ENCODE measurements at regions of chr4 and their contacts with region 1.

Region 1: DNA sequence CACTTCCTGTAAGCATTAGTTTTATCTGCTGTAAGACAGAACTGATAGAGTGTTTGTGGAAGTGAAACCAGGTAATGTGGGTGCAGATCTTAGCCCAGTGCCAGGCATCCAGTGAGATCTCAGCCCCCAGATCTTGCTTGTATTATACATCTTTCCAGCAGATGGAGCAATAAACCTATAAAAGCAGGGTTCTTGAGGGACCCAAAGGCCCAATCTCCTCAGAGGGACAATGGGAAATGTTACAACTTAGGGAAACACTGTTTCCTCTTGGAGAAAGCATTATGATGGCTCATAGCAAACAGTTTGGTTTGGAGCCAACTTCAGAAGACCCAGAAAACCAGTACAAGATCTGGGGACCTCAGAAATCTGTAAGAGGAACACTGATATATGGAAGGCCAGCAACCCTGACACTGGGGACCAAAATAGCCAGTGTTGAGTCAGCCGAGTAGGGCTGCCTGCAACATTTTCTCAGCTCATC is 206.3 kb downstream of the SLC7A11 start:
- DNase-seq: peak in 1 of 10 donors; percentile 25
- H3K4me3 ChIP-seq: no peak overlapping the region
- H3K27ac ChIP-seq: no peak overlapping the region
- H3K27me3 ChIP-seq: no peaks in the 10 kb centered on the region
- CTCF ChIP-seq: peak; percentile 28 to 89 (median 73)

Region 2: GRCh38 chr4:137968956-137969678 is 66.7 kb before region 1 on chr4:
- intact Hi-C with region 1: no loop called
- DNase-seq: no peak
- H3K4me3 ChIP-seq: no peak overlapping the region
- H3K27ac ChIP-seq: no peak overlapping the region
- H3K27me3 ChIP-seq: peaks cover 0 to 4% (median 0%) of the 10 kb centered on the region in 45 donors
- CTCF ChIP-seq: no peak

Region 3: DNA sequence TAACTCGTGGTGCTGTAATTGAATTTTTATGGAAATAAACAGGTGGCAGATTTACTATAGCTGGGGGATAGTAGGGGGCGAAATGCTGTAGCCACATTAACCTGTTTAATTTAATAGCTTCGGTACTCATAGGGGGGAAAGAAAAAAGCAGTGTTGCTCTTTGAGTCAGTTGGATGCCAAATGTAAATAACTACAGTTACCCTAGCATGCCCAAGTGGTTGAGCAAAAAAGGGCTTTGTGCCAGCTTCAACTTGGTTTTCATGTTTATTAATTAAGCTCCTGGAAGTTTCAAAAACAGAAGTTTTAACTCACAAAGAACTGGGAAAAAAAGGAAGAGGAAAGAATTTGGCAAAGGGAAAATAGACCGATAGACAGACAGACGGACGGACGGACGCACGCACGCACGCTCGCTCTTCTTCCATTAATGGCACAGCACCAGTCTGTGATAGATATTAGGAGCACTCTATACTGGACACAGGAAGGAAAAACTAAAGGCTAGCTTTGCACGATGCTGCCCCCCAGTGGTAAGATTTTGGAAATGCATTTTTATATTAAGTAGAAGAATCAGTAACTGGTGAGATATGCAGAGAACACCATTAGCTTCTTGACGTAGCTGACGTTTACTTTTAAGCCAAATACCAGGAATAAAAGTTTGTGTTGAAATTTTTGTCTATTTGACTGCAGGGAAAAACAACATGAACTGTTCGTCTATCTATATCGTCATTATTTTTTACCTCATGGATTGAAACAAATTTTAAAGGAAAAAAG is 54.5 kb after region 1 on chr4:
- intact Hi-C with region 1: loop called (anchors 2 to 10 kb)
- DNase-seq: peak in 5 of 10 donors; percentile 16 to 42 (median 38)
- H3K4me3 ChIP-seq: peak overlapping the region in 42 of 59 donors; percentile 4 to 55 (median 36)
- H3K27ac ChIP-seq: no peak overlapping the region
- H3K27me3 ChIP-seq: no peaks in the 10 kb centered on the region
- CTCF ChIP-seq: peak; percentile 72 to 97 (median 86)

Region 4: GRCh38 chr4:138182838-138183426 is 147.1 kb after region 1 on chr4:
- intact Hi-C with region 1: loop called (anchors 5 to 10 kb)
- DNase-seq: no peak
- H3K4me3 ChIP-seq: peak overlapping the region in 28 of 59 donors; percentile 0 to 55 (median 21)
- H3K27ac ChIP-seq: peak overlapping the region in 48 of 59 donors; percentile 0 to 90 (median 57)
- H3K27me3 ChIP-seq: no peaks in the 10 kb centered on the region
- CTCF ChIP-seq: peak; percentile 36 to 88 (median 70)

Region 5: DNA sequence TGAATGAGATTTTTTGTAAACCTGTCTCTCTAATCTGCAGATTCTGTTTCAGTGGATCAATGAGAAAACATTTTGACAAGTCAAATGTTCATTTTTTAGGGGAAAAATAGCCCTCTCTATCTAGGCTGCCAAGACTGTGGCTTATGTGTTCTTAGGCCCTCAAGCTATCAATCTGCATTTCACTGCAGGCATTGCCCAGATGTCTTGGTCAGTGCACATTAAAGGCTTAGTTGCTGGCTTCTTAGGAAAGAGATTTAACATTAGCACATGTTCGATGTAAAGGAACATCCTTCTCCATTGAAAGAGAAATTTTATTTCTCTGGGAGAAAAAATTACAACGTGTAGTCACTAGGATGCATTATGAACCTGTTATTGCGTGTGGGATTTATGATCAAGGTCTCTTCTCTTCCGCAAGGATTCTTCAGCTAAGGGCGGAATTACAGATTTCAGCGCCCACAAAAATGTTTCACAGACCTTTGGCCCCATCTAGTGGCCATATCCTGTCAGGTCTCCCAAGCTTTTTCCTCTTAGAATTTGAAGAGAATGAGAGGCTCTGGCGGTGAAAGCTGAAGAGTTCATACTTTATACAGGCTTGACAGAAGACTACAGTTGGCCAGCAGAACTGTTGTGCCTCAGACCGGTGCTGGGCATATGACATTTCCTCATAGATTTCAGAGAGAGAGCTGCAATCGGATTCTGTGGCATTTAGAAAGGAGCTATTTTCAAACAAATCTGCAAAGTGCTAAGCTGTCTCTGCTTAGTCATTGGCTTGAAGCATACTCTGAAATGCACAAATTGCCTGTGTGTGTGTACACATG is 835.1 kb after region 1 on chr4:
- intact Hi-C with region 1: loop called in 1 of 2 experiments (anchors 2 kb)
- DNase-seq: peak in 9 of 10 donors; percentile 42 to 82 (median 62)
- H3K4me3 ChIP-seq: peak overlapping the region in 5 of 59 donors; percentile 15 to 25 (median 22)
- H3K27ac ChIP-seq: peak overlapping the region in 12 of 59 donors; percentile 14 to 72 (median 45)
- H3K27me3 ChIP-seq: no peaks in the 10 kb centered on the region
- CTCF ChIP-seq: peak; percentile 80 to 98 (median 92)

Region 6: DNA sequence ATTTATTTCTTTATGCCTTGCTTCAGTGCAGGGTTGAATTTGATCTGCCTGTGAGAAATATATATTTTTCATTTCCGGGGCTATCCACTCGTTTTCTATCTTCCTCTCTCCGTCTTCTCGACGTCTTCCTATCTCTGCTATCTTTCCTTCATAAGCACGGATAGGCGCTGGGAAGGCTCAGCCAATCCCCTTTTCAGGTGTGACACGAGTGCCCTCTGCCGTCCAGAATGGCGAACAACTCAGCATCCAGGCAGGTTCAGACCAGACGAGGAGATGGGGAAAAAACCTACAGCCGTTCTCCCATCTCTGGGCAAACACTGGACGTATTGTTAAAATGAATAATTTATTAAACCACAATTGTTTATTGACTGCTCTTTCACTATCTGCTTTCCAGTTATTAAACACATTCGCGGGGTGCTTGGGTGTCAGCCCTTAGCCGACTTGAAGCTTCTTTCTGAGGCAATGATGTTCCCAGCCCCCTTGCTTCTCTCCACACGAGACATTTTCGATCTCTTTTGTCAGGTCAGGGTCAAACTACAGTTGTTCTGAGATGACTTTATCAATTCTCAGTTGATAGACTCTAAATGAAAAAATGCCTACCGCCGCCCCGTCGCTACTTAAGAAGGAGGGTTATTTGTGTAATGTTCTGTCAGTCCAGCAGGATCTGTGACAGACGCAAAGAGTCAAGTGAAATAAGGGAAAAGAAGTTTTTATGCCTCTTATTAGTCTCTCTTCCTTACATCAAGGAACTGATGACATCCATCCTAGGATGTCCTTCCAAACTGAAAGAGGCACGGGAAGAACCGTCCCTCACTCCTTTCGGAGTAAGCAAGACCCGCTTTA is 883.5 kb after region 1 on chr4:
- intact Hi-C with region 1: loop called in 1 of 2 experiments (anchors 10 kb)
- DNase-seq: peak; percentile 63 to 87 (median 82)
- H3K4me3 ChIP-seq: peak overlapping the region in 55 of 59 donors; percentile 0 to 57 (median 35)
- H3K27ac ChIP-seq: peak overlapping the region in 14 of 59 donors; percentile 2 to 68 (median 37)
- H3K27me3 ChIP-seq: no peaks in the 10 kb centered on the region
- CTCF ChIP-seq: peak; percentile 25 to 95 (median 78)

Measured in dorsolateral prefrontal cortex (tissue), 120 donors.